Lower lobe of right lung (tissue), 2 donors: ENCODE measurements at regions of chr10 and their contacts with region 1.

Region 1: DNA sequence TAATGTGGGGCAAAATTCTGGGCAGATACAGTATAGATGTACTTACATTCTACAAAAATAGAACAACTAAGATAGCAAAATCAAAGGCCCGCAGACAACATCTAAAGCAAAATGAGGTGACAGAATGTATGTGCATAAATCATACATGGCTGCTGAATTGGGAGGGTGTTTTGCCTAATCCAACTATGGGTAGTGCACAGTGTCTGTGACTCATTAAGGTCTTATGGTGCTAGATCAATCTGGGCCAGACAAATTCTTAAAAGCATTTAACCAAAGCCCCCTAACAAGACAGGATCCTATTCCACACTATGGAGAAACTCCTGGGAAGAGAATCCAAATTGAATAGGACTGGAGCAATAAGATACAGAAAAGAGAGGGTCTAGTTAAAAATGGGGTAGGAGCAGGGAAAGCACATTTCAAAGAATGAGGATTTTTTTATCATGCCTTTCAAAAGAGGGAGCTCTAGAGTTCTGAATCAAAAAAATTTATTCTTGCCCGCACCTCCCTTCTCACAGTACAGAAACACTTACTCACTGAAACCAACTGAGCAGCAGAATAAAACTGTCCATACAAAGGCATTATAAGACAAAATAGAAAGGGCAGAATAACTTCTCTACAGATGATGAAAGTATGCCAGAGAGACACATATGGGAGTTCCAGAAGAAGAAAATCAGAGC is 181.3 kb downstream of the RNLS start:
- DNase-seq: no peak
- ATAC-seq: peak in 1 of 2 donors; percentile 14
- H3K4me3 ChIP-seq: no peak overlapping the region
- H3K27ac ChIP-seq: no peak overlapping the region
- H3K4me1 ChIP-seq: no peaks in the 10 kb centered on the region
- H3K27me3 ChIP-seq: no peaks in the 10 kb centered on the region
- CTCF ChIP-seq: peak; percentile 34

Region 2: GRCh38 chr10:88095223-88095721 is 306.5 kb before region 1 on chr10:
- intact Hi-C with region 1: no loop called
- DNase-seq: no peak
- ATAC-seq: no peak
- H3K4me3 ChIP-seq: no peak overlapping the region
- H3K27ac ChIP-seq: no peak overlapping the region
- H3K4me1 ChIP-seq: peaks cover 18% of the 10 kb centered on the region
- H3K27me3 ChIP-seq: no peaks in the 10 kb centered on the region
- CTCF ChIP-seq: no peak

Region 3: GRCh38 chr10:88553116-88553752 is 151.4 kb after region 1 on chr10:
- intact Hi-C with region 1: loop called (anchors 10 kb)
- DNase-seq: no peak
- ATAC-seq: peak; percentile 87 to 96
- H3K4me3 ChIP-seq: no peak overlapping the region
- H3K27ac ChIP-seq: no peak overlapping the region
- H3K4me1 ChIP-seq: no peaks in the 10 kb centered on the region
- H3K27me3 ChIP-seq: no peaks in the 10 kb centered on the region
- CTCF ChIP-seq: peak; percentile 78